CD4-positive, alpha-beta T cell (primary cell): ENCODE measurements at regions of chr21 and their contacts with region 1.

Region 1: DNA sequence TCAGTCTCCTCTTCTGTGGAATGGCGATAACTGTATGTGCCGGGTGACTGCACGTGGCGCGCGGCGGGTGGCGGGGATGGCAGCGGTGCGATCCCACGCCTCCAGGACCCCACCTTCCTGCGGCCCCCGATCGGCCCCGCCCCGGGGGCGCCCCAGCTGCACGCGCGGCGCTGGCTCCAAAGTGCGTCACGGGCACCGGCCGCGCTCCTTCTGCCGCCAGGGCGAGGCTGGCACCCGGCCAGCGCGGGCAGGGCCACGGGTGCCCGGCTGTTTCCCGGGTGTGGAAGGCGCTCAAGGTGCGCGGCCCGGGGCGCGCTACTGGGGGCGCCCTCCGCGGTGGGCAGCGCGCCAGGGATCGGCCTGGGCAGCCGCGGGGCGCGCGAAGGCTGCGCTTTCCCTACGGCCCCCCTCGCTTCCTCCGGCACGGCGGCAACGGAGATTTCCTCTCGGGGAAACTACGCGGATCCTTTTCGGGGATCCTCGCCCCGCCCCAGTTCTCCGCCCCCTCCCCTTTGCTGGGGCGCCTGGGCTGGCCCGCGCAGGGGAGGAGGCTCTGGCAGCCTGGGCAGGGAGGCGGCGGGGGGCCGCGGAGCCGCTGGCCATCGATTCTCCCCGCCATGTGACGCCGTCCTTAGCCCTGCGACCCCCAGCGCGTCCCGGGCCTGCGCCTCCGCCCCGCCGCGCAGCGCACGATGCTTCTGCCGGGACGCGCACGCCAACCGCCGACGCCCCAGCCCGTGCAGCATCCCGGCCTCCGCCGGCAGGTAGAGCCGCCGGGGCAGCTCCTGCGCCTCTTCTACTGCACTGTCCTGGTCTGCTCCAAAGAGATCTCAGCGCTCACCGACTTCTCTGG is at the start of gene EVA1C:
- DNase-seq: peak; percentile 54 to 92 (median 66)
- ATAC-seq: peak; percentile 62
- H3K4me3 ChIP-seq: peak within 1 kb of the TSS; percentile 96
- H3K4me3 Mint-ChIP-seq: peak within 1 kb of the TSS; percentile 97
- H3K27ac ChIP-seq: peak within 1 kb of the TSS; percentile 64 to 96
- H3K27ac Mint-ChIP-seq: peak within 1 kb of the TSS; percentile 97
- H3K4me1 ChIP-seq: peaks cover 31% of the 10 kb centered on the region
- H3K4me1 Mint-ChIP-seq: peaks cover 52% of the 10 kb centered on the region
- H3K27me3 ChIP-seq: no peaks in the 10 kb centered on the region
- H3K27me3 Mint-ChIP-seq: no peaks in the 10 kb centered on the region
- CTCF ChIP-seq: peak; percentile 17
- total RNA-seq, gene EVA1C: 11.1 to 12.7 TPM

Region 2: GRCh38 chr21:32329331-32329730 is 83.1 kb before region 1 on chr21:
- CTCF ChIA-PET with region 1: no interaction called
- POLR2A ChIA-PET with region 1: no interaction called
- intact Hi-C with region 1: no loop called
- DNase-seq: no peak
- ATAC-seq: no peak
- H3K4me3 ChIP-seq: no peak overlapping the region
- H3K4me3 Mint-ChIP-seq: no peak overlapping the region
- H3K27ac ChIP-seq: no peak overlapping the region
- H3K27ac Mint-ChIP-seq: no peak overlapping the region
- H3K4me1 ChIP-seq: no peaks in the 10 kb centered on the region
- H3K4me1 Mint-ChIP-seq: no peaks in the 10 kb centered on the region
- H3K27me3 ChIP-seq: no peaks in the 10 kb centered on the region
- H3K27me3 Mint-ChIP-seq: no peaks in the 10 kb centered on the region
- CTCF ChIP-seq: no peak

Region 3: GRCh38 chr21:32494934-32495703 is 82.7 kb after region 1 on chr21:
- CTCF ChIA-PET with region 1: no interaction called
- POLR2A ChIA-PET with region 1: interaction called, 3 read pairs
- intact Hi-C with region 1: loop called (anchors 5 kb)
- DNase-seq: peak in 1 of 14 experiments; percentile 17
- ATAC-seq: no peak
- H3K4me3 ChIP-seq: no peak overlapping the region
- H3K4me3 Mint-ChIP-seq: no peak overlapping the region
- H3K27ac ChIP-seq: no peak overlapping the region
- H3K27ac Mint-ChIP-seq: peak overlapping the region; percentile 31
- H3K4me1 ChIP-seq: peaks cover 13% of the 10 kb centered on the region
- H3K4me1 Mint-ChIP-seq: peaks cover 10% of the 10 kb centered on the region
- H3K27me3 ChIP-seq: no peaks in the 10 kb centered on the region
- H3K27me3 Mint-ChIP-seq: no peaks in the 10 kb centered on the region
- CTCF ChIP-seq: no peak

Region 4: GRCh38 chr21:32538147-32538792 is 125.9 kb after region 1 on chr21:
- CTCF ChIA-PET with region 1: no interaction called
- POLR2A ChIA-PET with region 1: interaction called, 10 read pairs
- intact Hi-C with region 1: no loop called
- DNase-seq: peak in 8 of 14 experiments; percentile 16 to 63 (median 31)
- ATAC-seq: peak; percentile 93
- H3K4me3 ChIP-seq: no peak overlapping the region
- H3K4me3 Mint-ChIP-seq: no peak overlapping the region
- H3K27ac ChIP-seq: no peak overlapping the region
- H3K27ac Mint-ChIP-seq: peak overlapping the region; percentile 40
- H3K4me1 ChIP-seq: peaks cover 8% of the 10 kb centered on the region
- H3K4me1 Mint-ChIP-seq: peaks cover 23% of the 10 kb centered on the region
- H3K27me3 ChIP-seq: no peaks in the 10 kb centered on the region
- H3K27me3 Mint-ChIP-seq: no peaks in the 10 kb centered on the region
- CTCF ChIP-seq: no peak